Psoas muscle (tissue), 8 donors: ENCODE measurements at regions of chr5 and their contacts with region 1.

Region 1: DNA sequence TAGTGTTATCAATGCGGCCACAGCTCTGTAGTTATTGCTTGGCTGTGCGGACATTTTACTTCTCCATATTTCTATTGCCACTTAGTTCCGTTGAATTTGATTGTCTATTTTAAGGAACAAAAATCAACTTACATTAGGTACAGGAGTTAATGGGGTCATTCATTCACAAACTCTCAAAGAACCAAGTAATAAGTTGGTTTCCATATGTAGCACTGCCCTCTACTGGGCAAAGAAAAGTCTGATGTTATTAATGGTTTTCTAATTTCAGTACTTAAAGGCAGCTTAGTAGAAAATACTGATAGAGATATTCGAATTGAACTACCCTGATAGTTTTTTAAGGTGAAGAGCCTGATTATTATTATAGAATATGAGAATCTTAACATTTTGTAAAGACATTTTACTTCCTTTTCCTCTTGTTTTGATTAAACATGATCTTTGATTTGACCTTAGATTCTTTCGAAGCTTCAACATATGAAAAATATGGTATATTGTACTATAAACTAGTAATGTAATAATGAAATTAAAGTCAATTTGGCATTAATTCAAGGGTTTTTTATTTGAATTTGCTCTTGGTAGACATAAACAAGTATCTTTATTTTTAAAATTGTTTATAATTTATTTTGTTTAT is 119.5 kb upstream of the CTNND2 start:
- DNase-seq: no peak
- ATAC-seq: no peak
- H3K4me3 ChIP-seq: no peak overlapping the region
- H3K27ac ChIP-seq: no peak overlapping the region
- H3K4me1 ChIP-seq: no peaks in the 10 kb centered on the region
- H3K27me3 ChIP-seq: no peaks in the 10 kb centered on the region
- CTCF ChIP-seq: peak; percentile 40

Region 2: DNA sequence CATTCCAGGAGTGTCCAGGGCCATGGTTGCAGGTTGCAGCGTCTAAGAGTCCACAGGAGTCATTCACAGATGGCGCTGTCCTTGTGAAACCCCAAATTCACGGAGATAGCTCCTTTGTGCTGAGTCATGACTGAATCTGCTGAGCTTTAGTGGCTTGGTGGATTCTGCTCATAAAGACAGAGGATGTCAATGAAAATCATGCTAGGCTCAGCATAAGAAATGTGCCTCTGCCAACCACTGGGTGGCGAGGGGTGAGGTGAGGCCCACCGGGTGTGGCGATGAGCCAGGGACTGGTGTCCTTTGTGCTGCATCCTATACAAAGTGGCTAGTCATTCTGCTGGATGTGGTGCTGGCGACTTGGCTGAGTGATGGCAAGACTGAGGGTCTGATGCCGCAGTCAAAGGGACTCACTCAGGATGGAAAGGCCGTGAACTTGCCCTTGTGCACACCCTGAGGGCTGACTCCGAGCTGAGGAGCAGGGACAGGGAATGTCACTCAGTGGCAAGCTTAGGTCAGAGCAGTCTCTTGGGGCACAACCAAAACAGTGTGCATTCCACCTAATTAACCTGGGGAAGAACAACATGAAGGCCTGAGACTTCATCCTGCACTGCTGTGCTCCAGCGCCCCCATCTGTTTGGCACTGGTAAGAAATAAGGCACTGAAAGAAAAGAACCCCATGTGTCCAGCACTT is 1334.2 kb before region 1 on chr5:
- intact Hi-C with region 1: loop called in 1 of 2 experiments (anchors 5 kb)
- DNase-seq: no peak
- ATAC-seq: peak in 1 of 4 donors; percentile 21
- H3K4me3 ChIP-seq: no peak overlapping the region
- H3K27ac ChIP-seq: no peak overlapping the region
- H3K4me1 ChIP-seq: no peaks in the 10 kb centered on the region
- H3K27me3 ChIP-seq: peaks cover 0 to 2% (median 0%) of the 10 kb centered on the region in 3 donors
- CTCF ChIP-seq: peak; percentile 16

Region 3: DNA sequence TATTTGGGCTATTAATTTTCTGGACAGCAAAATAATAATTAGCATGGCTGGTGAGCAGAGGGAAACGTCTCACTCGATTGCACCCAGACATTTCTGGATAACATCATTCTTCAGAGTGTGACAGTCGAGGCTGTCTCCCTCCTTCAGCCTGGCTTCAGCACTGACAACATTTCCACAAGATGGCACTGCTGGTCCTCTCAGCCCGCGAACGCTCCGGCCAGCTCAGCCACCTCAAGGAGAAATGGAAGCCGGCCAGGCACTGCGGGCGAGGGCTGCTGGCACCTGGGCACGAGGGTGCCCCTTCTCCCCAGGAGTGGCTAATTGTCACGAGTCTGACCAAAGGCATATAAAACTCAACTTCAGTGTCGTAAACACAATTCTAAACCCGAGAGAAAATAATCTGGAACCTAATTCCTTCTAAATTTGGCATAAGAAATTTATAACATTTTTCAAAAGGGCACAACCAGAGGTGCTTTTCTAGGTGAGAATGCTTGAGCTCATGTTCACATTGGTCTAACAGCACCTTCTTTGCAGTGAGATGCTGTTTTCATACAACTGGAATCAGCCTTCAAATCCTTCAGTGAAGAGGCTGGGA is 1328.6 kb before region 1 on chr5:
- intact Hi-C with region 1: loop called (anchors 5 kb)
- DNase-seq: peak; percentile 62 to 76
- ATAC-seq: peak; percentile 81 to 89 (median 85)
- H3K4me3 ChIP-seq: no peak overlapping the region
- H3K27ac ChIP-seq: no peak overlapping the region
- H3K4me1 ChIP-seq: no peaks in the 10 kb centered on the region
- H3K27me3 ChIP-seq: peaks cover 0 to 2% (median 0%) of the 10 kb centered on the region in 3 donors
- CTCF ChIP-seq: peak; percentile 77

Region 4: GRCh38 chr5:12270914-12271313 is 247.2 kb after region 1 on chr5:
- intact Hi-C with region 1: no loop called
- DNase-seq: no peak
- ATAC-seq: no peak
- H3K4me3 ChIP-seq: no peak overlapping the region
- H3K27ac ChIP-seq: no peak overlapping the region
- H3K4me1 ChIP-seq: no peaks in the 10 kb centered on the region
- H3K27me3 ChIP-seq: no peaks in the 10 kb centered on the region
- CTCF ChIP-seq: no peak